ENCODE measurements at regions of chr1 and their contacts with region 1.

Region 1: DNA sequence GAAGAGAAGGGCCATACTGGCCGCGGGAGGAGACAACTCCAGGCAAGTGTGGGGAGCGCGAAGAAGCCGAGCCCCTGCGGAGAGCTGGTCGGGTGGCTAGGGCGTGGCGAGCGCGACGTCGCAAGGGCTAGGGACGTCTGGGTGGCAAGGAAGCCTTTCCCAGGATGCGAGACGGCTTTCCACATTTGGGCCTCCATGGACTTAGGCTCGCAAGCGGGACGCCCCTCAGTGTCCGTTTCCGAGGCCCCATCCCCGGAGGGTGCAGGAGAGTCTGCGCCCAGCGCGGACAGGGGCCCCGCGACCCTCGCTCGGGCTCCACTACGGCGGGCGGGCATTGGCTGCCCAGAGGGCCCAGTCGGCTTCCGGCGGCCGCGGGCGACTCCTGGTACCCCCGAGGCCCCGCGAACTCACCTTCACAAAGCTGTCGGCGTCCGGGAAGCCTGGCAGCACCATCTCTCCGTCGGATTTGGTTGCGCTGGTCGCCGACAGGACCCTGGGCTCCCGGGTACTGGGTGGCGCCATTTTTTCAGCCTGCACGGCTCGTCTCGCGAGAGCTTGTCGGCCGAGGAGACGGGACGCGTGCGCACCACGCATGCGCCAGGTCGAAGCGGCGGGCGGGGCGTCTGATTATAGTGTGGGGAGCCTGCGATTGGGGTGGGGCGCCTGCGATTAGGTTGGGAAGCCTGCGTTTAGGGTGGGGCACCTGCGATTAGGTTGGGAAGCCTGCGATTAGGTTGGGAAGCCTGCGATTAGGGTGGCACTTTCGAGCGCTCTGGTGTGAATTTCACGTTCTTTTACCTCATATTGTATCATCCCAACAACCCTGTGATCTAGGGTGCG is at the start of gene EXOSC10:
- DNase-seq: peak; percentile 86 to 96 (median 92)
- H3K4me3 ChIP-seq: peak within 1 kb of the TSS; percentile 78 to 100 (median 98)
- H3K27ac ChIP-seq: peak within 1 kb of the TSS; percentile 22 to 95 (median 85)
- H3K27me3 ChIP-seq: no peaks in the 10 kb centered on the region
- CTCF ChIP-seq: peak in 53 of 56 donors; percentile 12 to 67 (median 39)
- total RNA-seq, gene EXOSC10: 38.5 to 121 (median 79.0) TPM

Region 2: GRCh38 chr1:10841118-10841517 is 258.4 kb before region 1 on chr1:
- intact Hi-C with region 1: no loop called
- DNase-seq: no peak
- H3K4me3 ChIP-seq: no peak overlapping the region
- H3K27ac ChIP-seq: no peak overlapping the region
- H3K27me3 ChIP-seq: peaks cover 0 to 48% (median 13%) of the 10 kb centered on the region in 45 donors
- CTCF ChIP-seq: no peak

Region 3: GRCh38 chr1:11037740-11038182 is 61.8 kb before region 1 on chr1:
- intact Hi-C with region 1: no loop called
- DNase-seq: peak; percentile 82 to 94 (median 88)
- H3K4me3 ChIP-seq: no peak overlapping the region
- H3K27ac ChIP-seq: peak overlapping the region in 1 of 59 donors; percentile 44
- H3K27me3 ChIP-seq: no peaks in the 10 kb centered on the region
- CTCF ChIP-seq: peak; percentile 75 to 99 (median 96)

Region 4: DNA sequence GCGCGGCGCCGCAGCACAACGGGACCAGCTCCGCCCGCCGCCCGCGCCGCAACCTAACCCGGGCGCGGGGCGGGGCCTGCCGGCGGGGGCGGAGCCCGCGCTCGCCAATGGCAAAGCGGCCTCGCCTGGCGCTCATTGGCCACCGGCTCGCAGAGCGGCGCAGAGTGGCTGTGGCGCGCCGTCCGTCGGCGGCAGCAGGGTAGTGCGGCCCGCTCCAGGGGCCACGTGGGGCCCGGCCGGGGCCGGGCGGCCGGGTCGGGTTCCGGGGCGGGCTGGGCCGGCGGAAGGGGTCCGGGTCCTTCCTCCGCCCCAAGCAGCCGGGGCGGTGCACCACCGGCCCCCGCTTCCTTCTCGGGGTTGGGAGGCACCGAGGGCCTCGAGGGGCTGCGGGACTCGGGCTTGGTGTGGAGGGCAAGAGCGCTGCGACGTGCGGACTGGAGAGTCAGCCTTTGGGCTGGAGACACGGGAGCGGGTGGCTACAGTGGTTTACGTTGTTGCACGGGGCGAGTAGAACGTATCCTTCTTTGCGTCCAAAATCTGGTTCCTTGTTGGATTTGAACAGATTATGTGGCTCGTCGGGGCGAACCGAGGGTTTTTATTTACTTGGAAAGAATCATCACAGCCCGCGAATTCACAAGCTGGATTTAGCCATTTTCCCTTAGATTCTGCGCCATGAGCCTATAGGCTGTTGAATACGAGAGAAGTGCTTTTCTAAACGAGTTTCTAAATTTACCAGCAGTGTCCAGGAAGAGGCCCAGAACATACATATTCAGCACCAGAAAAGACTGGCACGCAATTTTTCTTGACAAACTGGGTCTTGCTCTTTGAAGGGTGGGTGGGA is 39.3 kb before region 1 on chr1 and contains the start of gene SRM:
- intact Hi-C with region 1: loop called in 1 of 2 experiments (anchors 2 kb)
- DNase-seq: peak; percentile 72 to 97 (median 89)
- H3K4me3 ChIP-seq: peak within 1 kb of the TSS; percentile 77 to 99 (median 91)
- H3K27ac ChIP-seq: peak within 1 kb of the TSS in 53 of 59 donors; percentile 6 to 87 (median 68)
- H3K27me3 ChIP-seq: no peaks in the 10 kb centered on the region
- CTCF ChIP-seq: peak in 46 of 56 donors; percentile 5 to 74 (median 56)
- total RNA-seq, gene SRM: 32.9 to 80.2 (median 52.9) TPM

Region 5: GRCh38 chr1:11198851-11199594 is 99.5 kb after region 1 on chr1:
- intact Hi-C with region 1: loop called in 1 of 2 experiments (anchors 5 kb)
- DNase-seq: peak in 9 of 10 donors; percentile 27 to 89 (median 68)
- H3K4me3 ChIP-seq: peak overlapping the region in 1 of 59 donors; percentile 7
- H3K27ac ChIP-seq: peak overlapping the region in 51 of 59 donors; percentile 0 to 87 (median 55)
- H3K27me3 ChIP-seq: no peaks in the 10 kb centered on the region
- CTCF ChIP-seq: peak in 1 of 56 donors; percentile 9

Region 6: GRCh38 chr1:11214698-11215380 is 115.3 kb after region 1 on chr1:
- intact Hi-C with region 1: loop called in 1 of 2 experiments (anchors 5 kb)
- DNase-seq: no peak
- H3K4me3 ChIP-seq: no peak overlapping the region
- H3K27ac ChIP-seq: peak overlapping the region in 27 of 59 donors; percentile 6 to 63 (median 40)
- H3K27me3 ChIP-seq: no peaks in the 10 kb centered on the region
- CTCF ChIP-seq: no peak